BJ (cell line): ENCODE measurements at regions of chr18 and their contacts with region 1.

Region 1: DNA sequence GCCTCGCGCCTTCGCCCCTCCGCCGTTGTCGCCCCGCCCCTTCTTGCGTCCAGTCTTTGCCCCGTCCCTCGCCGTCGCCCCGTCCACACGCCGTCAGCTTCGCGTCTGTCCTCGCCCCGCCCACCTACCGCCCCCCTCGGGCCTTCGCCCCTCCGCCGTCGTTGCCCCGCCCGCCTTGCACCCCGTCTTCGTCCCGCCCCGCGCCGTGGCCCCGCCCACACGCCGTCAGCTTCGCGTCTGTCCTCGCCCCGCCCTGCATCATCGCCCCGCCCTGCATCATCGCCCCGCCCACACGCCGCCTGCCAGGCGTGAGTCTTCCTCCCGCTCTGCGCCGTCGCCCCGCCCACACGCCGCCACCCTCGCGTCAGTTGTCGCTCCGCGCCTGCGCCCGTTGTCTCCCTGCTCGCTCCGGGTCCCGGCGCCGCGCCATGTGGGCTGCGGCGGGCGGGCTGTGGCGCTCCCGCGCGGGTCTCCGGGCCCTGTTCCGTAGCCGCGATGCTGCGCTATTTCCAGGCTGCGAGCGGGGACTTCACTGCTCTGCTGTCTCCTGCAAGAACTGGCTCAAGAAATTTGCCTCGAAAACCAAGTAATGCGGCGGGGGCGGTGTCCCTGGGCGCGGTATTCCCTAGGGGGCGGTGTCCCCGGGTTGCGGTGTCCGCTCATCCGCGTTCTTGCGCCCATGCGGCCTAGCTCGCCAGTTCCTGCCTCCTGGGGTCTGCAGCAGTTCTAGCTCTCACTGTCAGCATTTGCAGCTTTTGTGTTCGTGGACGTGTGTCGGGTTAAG is at the start of gene RBFA:
- DNase-seq: peak; percentile 82
- H3K4me3 ChIP-seq: peak within 1 kb of the TSS; percentile 87
- H3K27me3 ChIP-seq: no peaks in the 10 kb centered on the region
- CTCF ChIP-seq: peak; percentile 53
- polyA plus RNA-seq, gene RBFA: 26.1 and 32.4 TPM in 2 replicates

Region 2: DNA sequence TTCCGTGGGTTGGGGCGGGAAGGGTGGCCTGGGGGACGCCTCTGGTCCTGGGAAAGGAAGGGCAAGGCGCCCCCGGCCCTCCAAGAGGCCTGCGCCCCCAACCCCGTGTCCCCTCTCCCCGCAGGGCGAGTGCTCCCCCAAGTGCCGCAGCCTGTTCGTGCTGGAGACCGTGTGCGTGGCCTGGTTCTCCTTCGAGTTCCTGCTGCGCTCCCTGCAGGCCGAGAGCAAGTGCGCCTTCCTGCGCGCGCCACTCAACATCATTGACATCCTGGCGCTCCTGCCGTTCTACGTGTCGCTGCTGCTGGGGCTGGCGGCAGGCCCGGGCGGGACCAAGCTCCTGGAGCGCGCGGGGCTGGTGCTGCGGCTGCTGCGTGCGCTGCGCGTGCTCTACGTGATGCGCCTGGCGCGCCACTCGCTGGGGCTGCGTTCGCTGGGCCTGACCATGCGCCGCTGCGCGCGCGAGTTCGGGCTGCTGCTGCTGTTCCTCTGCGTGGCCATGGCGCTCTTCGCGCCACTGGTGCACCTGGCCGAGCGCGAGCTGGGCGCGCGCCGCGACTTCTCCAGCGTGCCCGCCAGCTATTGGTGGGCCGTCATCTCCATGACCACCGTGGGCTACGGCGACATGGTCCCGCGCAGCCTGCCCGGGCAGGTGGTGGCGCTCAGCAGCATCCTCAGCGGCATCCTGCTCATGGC is 135.2 kb before region 1 on chr18:
- CTCF ChIA-PET with region 1: no interaction called
- POLR2A ChIA-PET with region 1: interaction called, 20 read pairs
- DNase-seq: no peak
- H3K4me3 ChIP-seq: no peak overlapping the region
- H3K27me3 ChIP-seq: no peaks in the 10 kb centered on the region
- CTCF ChIP-seq: no peak

Region 3: DNA sequence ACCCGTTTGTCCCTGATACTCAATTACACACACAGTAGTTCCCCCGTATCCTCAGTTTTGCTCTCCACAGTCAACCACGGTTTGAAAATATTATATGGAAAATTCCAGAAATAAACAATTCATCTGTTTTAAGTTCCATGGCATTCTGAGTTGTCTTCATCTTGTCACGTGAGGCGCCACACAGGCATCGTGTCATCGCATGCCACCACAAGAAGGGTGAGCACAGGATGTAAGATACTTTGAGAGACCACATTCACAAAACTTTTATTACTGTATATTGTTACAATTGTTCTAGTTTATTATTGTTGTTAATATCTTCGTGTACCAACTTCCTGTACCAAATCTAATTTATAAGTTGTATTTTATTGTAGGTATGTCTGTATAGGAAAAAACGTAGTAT is 92.5 kb after region 1 on chr18:
- CTCF ChIA-PET with region 1: no interaction called
- POLR2A ChIA-PET with region 1: interaction called, 12 read pairs
- DNase-seq: no peak
- H3K4me3 ChIP-seq: no peak overlapping the region
- H3K27me3 ChIP-seq: no peaks in the 10 kb centered on the region
- CTCF ChIP-seq: no peak